Aorta (tissue), 5 donors: ENCODE measurements at regions of chr2 and their contacts with region 1.

Region 1: DNA sequence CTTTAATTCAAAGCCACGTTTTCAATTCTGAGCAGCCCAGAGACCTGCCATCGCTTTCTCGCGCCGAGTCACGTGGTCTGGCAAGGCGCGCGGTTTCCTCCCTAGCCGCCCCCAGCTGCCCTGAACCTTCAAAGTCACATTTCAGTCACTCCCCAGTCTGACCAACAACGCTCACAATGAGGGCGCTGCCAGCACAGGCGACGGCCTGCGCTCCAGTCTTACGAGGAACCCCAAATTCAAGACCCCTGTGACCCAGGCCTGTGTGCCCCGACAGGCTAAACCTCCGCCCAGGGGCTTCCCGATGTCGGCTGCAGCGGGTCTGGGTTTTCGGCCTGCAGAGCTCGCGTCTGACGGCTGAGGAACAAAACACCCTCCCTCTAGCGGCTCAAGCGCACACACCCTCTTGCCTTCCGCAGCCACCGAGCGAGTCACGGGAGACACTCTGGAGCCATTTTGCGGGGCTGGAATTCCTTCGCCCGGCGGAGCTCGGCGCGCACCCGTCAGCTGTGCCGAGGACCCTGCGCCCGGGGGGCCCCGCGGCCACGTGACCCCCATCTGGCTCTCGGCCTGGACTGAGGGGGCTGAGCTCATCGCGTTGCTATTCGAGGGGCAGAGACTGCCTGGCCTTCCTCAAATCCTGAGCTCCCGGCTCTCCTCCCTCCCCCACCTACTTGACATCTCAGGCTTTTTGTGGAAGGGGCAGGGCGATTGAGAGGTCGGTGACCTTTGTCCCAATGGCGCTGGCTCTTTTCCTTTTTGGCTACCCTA is 69.9 kb upstream of the ITGB6 start:
- DNase-seq: peak; percentile 92 to 96
- ATAC-seq: peak; percentile 94
- H3K4me3 ChIP-seq: peak overlapping the region; percentile 29 to 36
- H3K27ac ChIP-seq: peak overlapping the region; percentile 92 to 93
- H3K4me1 ChIP-seq: no peaks in the 10 kb centered on the region
- H3K27me3 ChIP-seq: no peaks in the 10 kb centered on the region

Region 2: DNA sequence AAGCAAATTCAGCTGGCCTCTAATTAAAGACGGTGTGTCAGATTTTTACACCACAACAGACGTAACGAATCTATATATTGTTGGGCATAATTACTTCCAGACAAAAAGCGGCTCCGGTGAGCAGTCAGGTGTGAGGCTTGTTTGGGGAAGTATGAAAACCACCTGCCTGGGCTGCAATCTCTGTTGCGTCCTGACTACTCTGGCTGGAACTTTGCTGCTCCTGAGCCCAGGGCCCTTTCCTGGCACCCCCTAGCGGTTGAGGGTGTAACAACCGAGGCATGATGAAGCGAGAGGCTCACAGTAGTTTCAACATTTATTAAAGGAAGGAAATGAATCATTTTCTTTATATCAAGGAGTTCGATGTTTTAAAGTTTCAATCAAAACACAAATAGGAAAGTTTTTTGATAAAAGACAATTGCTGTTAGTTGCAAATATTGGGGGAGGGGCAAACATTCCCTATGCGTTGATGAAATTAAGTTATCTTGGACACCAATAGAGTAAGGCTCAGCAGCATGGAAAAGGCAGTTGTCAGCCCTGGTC is 59.3 kb before region 1 on chr2:
- intact Hi-C with region 1: loop called in 1 of 2 experiments (anchors 10 kb)
- DNase-seq: peak; percentile 80 to 81
- ATAC-seq: no peak
- H3K4me3 ChIP-seq: no peak overlapping the region
- H3K27ac ChIP-seq: no peak overlapping the region
- H3K4me1 ChIP-seq: no peaks in the 10 kb centered on the region
- H3K27me3 ChIP-seq: no peaks in the 10 kb centered on the region

Region 3: GRCh38 chr2:160228106-160228916 is 41.7 kb before region 1 on chr2:
- intact Hi-C with region 1: no loop called
- DNase-seq: no peak
- ATAC-seq: no peak
- H3K4me3 ChIP-seq: no peak overlapping the region
- H3K27ac ChIP-seq: peak overlapping the region in 1 of 2 donors; percentile 30
- H3K4me1 ChIP-seq: peaks cover 0 to 7% of the 10 kb centered on the region in 2 donors
- H3K27me3 ChIP-seq: no peaks in the 10 kb centered on the region

Region 4: DNA sequence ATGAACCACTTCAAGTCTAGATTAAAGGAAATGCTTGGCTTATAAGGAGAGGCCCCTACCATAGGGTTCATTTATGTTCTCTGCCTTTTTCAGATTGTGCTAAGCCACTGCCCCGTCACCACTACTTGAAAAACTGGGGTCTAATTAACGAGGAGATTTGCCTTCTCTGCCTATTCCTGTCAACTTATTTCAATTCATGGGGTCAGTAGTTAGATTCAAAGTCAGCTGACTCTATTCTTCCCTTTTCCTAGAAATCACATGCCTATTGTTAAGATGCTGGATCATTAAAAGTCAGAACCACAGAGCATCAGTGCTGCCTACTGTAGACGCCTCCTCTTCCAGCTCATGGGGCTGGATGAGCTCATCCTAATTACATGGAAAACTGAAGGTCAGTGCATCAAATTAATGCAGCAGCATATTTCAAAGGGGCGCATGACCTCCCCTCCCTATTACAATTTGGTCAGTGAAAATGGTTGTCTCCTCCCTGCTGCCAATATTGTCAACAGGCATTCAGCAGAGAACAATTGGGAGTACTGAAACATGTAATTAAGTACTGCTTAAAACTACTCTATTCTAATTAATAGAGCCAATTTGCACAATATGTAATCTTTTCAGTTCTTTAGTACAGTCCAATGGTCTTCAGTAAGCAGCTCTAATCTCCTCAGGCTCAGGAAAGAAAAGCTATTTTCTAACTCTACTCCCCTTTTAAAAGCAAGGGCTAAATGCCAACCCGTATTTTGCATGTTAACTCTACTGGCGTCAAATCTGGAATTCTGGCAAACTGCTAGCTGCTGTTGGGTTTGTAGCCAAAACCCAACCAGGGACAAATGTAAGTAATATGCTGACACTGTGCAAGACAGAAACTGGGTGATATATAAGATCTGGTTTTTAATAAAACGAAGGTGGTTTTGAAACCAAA is 47.5 kb after region 1 on chr2:
- intact Hi-C with region 1: loop called in 1 of 2 experiments (anchors 5 kb)
- DNase-seq: peak in 1 of 2 donors; percentile 56
- ATAC-seq: peak; percentile 12
- H3K4me3 ChIP-seq: no peak overlapping the region
- H3K27ac ChIP-seq: no peak overlapping the region
- H3K4me1 ChIP-seq: peaks cover 6 to 22% of the 10 kb centered on the region in 2 donors
- H3K27me3 ChIP-seq: no peaks in the 10 kb centered on the region

Region 5: GRCh38 chr2:160387558-160388262 is 117.7 kb after region 1 on chr2:
- intact Hi-C with region 1: no loop called
- DNase-seq: peak; percentile 80 to 83
- ATAC-seq: peak; percentile 92
- H3K4me3 ChIP-seq: no peak overlapping the region
- H3K27ac ChIP-seq: peak overlapping the region; percentile 31 to 41
- H3K4me1 ChIP-seq: peaks cover 7 to 16% of the 10 kb centered on the region in 2 donors
- H3K27me3 ChIP-seq: no peaks in the 10 kb centered on the region